Esophagus muscularis mucosa (tissue), 4 donors: ENCODE measurements at regions of chr13 and their contacts with region 1.

Region 1: DNA sequence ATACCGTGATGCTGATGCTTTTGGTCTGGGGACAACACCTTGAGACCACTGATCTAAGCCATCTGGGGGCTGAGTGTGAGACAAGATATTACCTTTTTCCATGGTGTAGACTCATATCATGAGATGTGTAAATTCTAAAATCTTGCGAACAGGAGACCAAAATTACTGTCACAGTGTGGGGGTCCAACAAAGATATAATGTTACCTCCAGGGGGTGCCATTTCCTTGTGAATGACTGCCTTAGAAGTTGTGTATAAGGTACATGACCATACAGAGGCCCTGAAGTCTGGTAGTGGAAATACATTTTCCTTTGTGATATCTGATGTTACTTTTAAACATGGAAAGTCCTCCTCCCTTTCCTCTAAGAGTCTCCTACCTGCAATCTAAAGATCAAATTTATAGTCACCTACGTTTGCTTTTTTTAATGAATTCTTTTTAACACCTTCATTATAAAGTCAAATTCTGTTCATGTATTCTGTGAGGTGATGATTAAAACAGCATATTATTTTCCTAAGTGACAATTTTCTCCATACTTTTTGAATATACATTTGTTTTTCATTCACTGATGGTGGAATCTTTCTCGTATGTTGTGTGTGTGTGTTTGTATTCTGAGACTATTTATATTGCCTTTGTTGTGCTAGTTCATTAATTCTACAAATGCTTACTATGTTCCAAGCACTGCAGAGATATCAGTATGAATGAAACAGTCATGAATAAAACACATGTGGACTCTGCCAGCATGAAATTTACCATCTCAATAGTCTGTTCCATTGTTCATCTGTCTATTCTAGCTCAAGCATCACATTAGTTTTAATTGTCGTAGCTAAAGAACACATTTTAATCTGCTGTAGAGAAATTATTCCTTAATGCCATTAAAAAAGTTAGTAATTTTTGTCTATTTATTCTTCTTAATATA is 113.7 kb downstream of the RFC3 start:
- DNase-seq: no peak
- H3K4me3 ChIP-seq: no peak overlapping the region
- H3K27ac ChIP-seq: no peak overlapping the region
- H3K4me1 ChIP-seq: peaks cover 0 to 11% (median 0%) of the 10 kb centered on the region in 4 donors
- H3K27me3 ChIP-seq: no peaks in the 10 kb centered on the region
- CTCF ChIP-seq: peak; percentile 45 to 51 (median 51)
- EP300 ChIP-seq: no peak
- POLR2A ChIP-seq: no peak

Region 2: GRCh38 chr13:35164324-35164932 is 1232.8 kb after region 1 on chr13:
- intact Hi-C with region 1: loop called (anchors 5 kb)
- DNase-seq: no peak
- H3K4me3 ChIP-seq: no peak overlapping the region
- H3K27ac ChIP-seq: no peak overlapping the region
- H3K4me1 ChIP-seq: peaks cover 0 to 6% (median 0%) of the 10 kb centered on the region in 4 donors
- H3K27me3 ChIP-seq: no peaks in the 10 kb centered on the region
- CTCF ChIP-seq: peak; percentile 64 to 68 (median 66)
- EP300 ChIP-seq: no peak
- POLR2A ChIP-seq: no peak